ENCODE measurements at regions of chr1 and their contacts with region 1.

Region 1: DNA sequence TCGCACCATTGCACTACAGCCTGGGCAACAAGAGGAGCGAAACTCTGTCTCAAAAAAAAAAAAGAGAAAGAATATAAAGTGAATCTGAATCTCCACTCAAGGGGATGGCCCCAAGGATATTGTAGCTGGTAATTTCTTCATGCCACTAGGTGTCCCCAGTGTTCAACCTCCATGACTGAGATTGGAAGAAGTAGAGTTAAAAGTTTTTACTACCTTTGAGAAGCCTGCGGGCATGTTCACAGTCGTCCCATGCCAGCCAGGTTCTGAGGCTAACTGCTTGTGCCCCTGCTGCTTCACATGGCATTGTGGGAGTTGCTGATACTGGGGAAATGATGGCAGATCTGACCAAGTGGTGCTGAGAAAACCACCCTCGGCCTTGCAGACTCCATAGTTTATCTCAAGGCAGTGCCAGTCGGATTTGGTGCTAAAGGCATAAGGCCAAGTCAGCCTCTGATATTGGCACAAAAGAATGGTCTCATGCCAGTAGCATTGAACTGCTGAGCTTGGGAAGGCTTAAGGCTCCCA is 10.8 kb upstream of the SHISA4 start:
- DNase-seq: peak; percentile 75
- H3K27ac ChIP-seq: peak overlapping the region; percentile 53
- CTCF ChIP-seq: peak; percentile 73

Region 2: GRCh38 chr1:201970334-201971159 is 92.6 kb after region 1 on chr1:
- CTCF ChIA-PET with region 1: interaction called, 13 read pairs
- POLR2A ChIA-PET with region 1: no interaction called
- DNase-seq: no peak
- H3K27ac ChIP-seq: no peak overlapping the region
- CTCF ChIP-seq: no peak

Region 3: GRCh38 chr1:202086678-202087547 is 209.0 kb after region 1 on chr1:
- CTCF ChIA-PET with region 1: no interaction called
- POLR2A ChIA-PET with region 1: no interaction called
- DNase-seq: no peak
- H3K27ac ChIP-seq: no peak overlapping the region
- CTCF ChIP-seq: no peak